GM10248 (cell line): ENCODE measurements at regions of chr17 and their contacts with region 1.

Region 1: DNA sequence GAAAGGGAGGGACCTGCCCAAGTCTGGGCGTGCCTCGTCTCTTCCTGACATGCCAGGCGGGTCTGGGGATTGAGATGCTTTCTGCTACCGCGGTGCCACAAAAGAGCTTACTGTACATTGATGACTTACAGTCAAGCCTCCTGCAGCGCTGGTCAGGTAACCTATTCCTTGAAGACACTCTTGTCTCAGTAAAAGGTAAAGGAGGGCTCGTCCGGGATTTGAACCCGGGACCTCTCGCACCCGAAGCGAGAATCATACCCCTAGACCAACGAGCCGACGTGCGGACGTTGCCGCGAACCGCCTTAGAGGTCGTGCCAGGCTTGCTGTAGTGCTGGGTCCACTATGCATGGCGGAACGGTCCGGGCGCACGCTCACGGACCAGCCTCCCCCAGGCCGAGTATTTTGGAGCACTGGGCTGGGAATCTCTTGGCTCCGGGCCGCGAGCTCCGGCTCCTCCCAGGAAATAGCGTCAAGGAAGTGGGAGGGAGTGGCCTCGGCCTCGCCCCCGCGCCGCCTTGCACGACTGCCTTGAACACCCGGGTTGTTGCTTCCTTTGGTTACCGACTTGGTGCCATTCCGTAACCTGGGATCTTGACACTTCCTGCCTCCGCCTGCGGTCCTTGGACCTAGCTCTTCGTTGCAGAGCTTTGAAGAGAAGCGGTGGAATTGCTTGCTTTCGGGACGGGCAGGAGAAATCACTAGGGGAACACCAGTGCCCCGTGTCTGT is 12.4 kb upstream of the AURKB start:
- DNase-seq: peak; percentile 73
- CTCF ChIP-seq: no peak

Region 2: DNA sequence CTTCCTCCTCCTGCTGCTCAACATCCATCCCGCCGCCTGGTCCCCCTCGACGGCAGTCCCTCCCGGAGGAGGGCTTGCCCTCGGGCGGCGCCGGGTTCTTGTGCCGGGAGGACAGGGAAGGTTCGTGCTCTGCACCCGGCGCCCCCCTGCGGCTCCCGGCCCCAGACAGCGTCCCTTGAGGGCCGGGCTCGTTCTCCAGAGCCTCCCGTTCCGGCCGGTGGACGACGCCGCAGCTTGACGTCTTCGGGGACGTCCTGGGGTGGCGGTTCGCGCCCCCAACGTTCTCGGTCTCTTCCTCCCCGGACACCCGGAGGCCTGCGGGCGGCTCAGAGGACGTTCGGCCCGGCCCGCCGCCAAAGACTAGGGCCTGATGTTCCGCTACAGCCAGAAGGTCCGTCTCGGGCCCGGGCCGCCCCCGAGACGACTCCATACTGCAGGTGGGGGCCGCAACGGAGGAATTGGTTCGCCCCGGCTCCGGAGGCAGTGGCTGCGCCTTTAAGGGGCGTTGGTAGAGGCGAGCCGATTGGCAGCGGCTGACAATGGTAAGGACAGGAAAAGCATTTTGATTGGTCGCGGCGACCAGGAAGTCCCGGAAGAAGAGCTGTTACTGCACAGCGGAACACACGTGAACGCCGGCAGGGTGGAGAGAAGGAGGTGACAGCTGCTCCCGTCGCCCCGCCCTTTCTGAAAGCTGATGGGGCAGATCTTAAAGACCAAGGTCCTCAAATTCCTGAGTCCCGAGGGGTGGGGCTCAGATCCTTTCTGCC is 32.9 kb before region 1 on chr17 and contains the start of gene BORCS6:
- CTCF ChIA-PET with region 1: interaction called, 30 read pairs
- POLR2A ChIA-PET with region 1: interaction called, 6 read pairs
- DNase-seq: peak; percentile 91
- CTCF ChIP-seq: peak; percentile 33

Region 3: GRCh38 chr17:8209909-8210760 is 12.7 kb before region 1 on chr17 and contains the start of gene AURKB:
- CTCF ChIA-PET with region 1: interaction called, 18 read pairs
- POLR2A ChIA-PET with region 1: interaction called, 18 read pairs
- DNase-seq: peak; percentile 96
- CTCF ChIP-seq: no peak

Region 4: GRCh38 chr17:8237175-8237574 is 14.4 kb after region 1 on chr17:
- CTCF ChIA-PET with region 1: interaction called, 42 read pairs
- POLR2A ChIA-PET with region 1: interaction called, 3 read pairs
- DNase-seq: no peak
- CTCF ChIP-seq: no peak

Region 5: DNA sequence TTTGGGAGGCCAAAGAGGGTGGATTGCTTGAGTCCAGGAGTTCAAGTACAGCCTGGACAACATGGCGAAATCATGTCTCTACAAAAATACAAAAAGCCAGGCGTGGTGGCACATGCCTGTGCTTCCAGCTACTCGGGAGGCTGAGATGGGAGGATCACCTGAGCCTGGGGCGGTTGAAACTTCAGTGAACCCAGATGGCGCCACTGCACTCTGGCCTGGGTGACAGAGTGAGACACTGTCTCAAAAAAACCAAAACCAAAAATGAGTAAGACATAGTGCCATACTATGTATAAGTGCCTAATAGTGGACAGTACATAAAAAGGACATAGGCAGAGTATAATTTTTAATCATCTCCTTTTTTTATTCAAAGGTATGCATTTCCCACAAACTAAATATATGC is 21.0 kb after region 1 on chr17:
- CTCF ChIA-PET with region 1: interaction called, 42 read pairs
- POLR2A ChIA-PET with region 1: interaction called, 7 read pairs
- DNase-seq: no peak
- CTCF ChIP-seq: no peak

Region 6: GRCh38 chr17:8300627-8301242 is 77.9 kb after region 1 on chr17:
- CTCF ChIA-PET with region 1: interaction called, 11 read pairs
- POLR2A ChIA-PET with region 1: interaction called, 9 read pairs
- DNase-seq: peak; percentile 86
- CTCF ChIP-seq: peak; percentile 88